ENCODE measurements at regions of chr3 and their contacts with region 1.

Region 1: DNA sequence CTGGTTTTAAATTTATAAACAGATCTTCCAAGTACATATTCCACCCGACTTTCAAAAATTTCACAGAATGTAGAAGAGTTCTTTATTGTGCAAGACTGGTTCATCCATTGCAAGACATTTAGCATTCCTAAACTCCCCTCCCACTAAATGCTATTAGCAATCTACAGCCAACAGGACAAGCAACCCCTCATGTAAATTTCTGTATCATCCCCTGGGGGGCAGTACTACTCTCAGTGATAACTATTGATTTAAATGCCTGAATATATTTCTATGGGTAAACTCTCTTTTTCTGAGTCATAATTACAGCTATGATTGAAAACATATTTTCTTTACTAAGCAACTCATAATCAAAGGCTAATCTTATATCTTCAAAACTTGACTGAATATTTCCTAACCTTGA is 10.7 kb upstream of the SLC15A2 start:
- DNase-seq: peak; percentile 44
- H3K4me3 ChIP-seq: no peak overlapping the region
- H3K27ac ChIP-seq: no peak overlapping the region
- H3K4me1 ChIP-seq: no peaks in the 10 kb centered on the region
- H3K27me3 ChIP-seq: no peaks in the 10 kb centered on the region
- CTCF ChIP-seq: peak; percentile 30 to 44
- POLR2A ChIP-seq: no peak

Region 2: GRCh38 chr3:121718205-121718846 is 165.2 kb before region 1 on chr3:
- CTCF ChIA-PET with region 1: no interaction called
- POLR2A ChIA-PET with region 1: no interaction called
- dilution Hi-C with region 1: no loop called
- intact Hi-C with region 1: no loop called
- DNase-seq: no peak
- H3K4me3 ChIP-seq: no peak overlapping the region
- H3K27ac ChIP-seq: no peak overlapping the region
- H3K4me1 ChIP-seq: no peaks in the 10 kb centered on the region
- H3K27me3 ChIP-seq: no peaks in the 10 kb centered on the region
- CTCF ChIP-seq: no peak
- POLR2A ChIP-seq: no peak

Region 3: DNA sequence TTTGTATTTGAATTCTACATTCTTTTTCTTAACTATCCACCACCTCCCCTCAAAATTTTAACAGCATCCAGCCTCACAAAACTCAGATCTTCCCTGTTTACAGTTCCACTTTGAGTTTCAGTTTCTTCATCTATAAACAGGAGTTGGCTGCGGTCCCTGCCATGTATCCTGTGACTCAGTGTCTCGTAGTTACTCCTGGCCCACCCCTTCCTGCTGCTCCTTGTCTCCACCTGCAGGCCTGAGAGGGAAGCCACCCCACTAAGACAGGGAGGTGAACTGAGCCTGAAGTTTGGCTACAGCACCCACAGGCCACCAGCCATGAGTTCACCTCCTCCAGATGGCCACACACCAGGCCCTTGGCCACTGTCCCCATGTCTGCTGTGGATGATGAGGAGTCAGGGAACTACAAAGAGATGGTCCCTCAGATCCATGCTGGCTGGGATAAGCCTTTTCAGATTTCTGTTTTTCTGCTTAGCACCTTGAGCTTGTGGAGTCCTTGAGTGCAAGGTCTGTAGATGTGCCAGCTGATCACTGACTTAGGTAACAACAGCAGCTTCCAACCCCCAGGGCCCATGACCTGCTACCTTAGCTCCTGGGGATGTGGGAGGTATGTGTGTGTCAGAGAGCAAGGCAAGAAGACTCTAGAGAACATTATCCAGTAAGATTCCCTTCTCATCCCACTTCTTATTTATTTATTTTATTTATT is 209.1 kb after region 1 on chr3:
- CTCF ChIA-PET with region 1: interaction called, 4 read pairs
- POLR2A ChIA-PET with region 1: no interaction called
- dilution Hi-C with region 1: no loop called
- intact Hi-C with region 1: loop called (anchors 1 kb)
- DNase-seq: peak; percentile 34
- H3K4me3 ChIP-seq: no peak overlapping the region
- H3K27ac ChIP-seq: no peak overlapping the region
- H3K4me1 ChIP-seq: peaks cover 6% of the 10 kb centered on the region
- H3K27me3 ChIP-seq: peaks cover 4% of the 10 kb centered on the region in 2 experiments
- CTCF ChIP-seq: peak; percentile 58 to 68
- POLR2A ChIP-seq: no peak

Region 4: GRCh38 chr3:122258757-122259371 is 375.4 kb after region 1 on chr3:
- CTCF ChIA-PET with region 1: interaction called, 9 read pairs
- POLR2A ChIA-PET with region 1: no interaction called
- dilution Hi-C with region 1: no loop called
- intact Hi-C with region 1: loop called (anchors 1 kb)
- DNase-seq: peak; percentile 54
- H3K4me3 ChIP-seq: no peak overlapping the region
- H3K27ac ChIP-seq: no peak overlapping the region
- H3K4me1 ChIP-seq: no peaks in the 10 kb centered on the region
- H3K27me3 ChIP-seq: peaks cover 7 to 11% of the 10 kb centered on the region in 2 experiments
- CTCF ChIP-seq: peak; percentile 56 to 63
- POLR2A ChIP-seq: no peak

Region 5: DNA sequence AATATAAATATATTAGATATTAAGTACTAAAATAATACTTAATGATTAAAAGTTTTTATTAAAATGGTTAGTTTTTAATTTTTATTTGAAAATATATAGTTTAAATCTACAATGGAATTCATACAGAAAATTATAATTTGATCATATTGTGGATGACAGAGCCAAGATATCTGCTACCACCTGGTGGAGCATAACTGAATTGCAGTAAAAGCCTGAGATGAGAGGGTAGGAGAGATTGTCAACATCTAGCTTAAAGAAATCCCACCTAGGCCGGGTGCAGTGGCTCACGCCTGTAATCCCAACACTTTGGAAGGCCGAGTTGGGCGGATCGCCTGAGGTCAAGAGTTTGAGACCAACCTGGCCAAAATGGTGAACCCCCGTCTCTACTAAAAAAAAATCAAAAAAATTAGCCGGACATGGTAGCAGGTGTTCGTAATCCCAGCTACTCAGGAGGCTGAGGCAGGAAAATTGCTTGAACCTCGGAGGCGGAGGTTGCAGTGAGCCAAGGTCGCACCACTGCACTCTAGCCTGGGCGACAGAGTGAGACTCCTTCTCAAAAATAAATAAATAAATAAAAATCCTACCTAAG is 416.5 kb after region 1 on chr3:
- CTCF ChIA-PET with region 1: no interaction called
- POLR2A ChIA-PET with region 1: no interaction called
- dilution Hi-C with region 1: no loop called
- intact Hi-C with region 1: loop called (anchors 2 kb)
- DNase-seq: peak; percentile 17
- H3K4me3 ChIP-seq: no peak overlapping the region
- H3K27ac ChIP-seq: no peak overlapping the region
- H3K4me1 ChIP-seq: no peaks in the 10 kb centered on the region
- H3K27me3 ChIP-seq: peaks cover 0 to 1% of the 10 kb centered on the region in 2 experiments
- CTCF ChIP-seq: peak; percentile 40 to 42
- POLR2A ChIP-seq: no peak

Measured in endothelial cell of umbilical vein (primary cell).